Panc1 (cell line): ENCODE measurements at regions of chr10 and their contacts with region 1.

Region 1: DNA sequence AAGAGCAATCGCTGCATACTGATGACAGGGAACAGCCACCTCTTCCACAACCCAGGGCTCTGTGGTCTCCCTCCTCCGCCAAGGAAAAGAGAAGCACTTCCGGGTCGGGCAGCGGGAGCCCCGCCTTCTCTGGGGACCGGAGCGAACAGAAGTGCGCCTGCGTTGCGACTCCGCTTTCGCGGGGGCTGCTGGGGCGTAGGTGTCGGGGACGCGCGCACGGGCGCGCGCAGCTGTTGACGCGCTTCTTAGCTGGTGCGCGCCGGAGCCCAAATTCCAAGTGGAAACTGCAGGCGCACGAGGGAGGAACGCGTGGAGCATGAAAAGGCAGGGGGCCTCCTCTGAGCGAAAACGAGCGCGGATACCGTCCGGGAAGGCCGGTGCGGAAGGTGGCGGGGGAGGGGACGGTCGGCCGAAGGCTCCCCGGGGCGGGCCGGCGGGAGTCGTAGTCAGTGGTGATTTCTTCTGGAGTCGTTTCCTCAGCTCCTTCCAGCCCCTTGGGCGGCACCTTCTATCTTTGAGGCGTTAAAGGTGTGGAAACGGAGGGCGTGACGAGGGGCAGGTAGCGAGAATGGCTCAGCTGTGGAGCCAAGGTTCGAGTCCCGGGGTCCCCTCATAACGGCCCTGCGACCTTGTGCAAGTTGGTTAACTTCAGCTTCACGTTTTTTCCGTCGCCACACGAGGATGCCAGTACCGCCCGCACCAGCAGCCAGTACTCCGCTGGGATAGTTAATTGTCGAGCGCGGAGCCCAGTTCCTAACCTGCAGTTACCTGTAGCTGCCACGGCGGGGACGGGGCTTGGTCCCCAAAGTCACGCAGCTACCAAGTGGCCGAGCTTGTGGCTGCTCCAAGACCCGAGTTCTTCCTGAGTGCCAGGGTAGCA is at the starts of genes COX15 and CUTC:
- DNase-seq: peak; percentile 91
- ATAC-seq: peak; percentile 96
- H3K4me3 ChIP-seq: peak within 1 kb of the TSS; percentile 92 to 93
- H3K27ac ChIP-seq: peak within 1 kb of the TSS; percentile 98
- H3K4me1 ChIP-seq: peaks cover 22% of the 10 kb centered on the region
- H3K27me3 ChIP-seq: no peaks in the 10 kb centered on the region
- CTCF ChIP-seq: peak; percentile 59
- total RNA-seq, gene COX15: 62.9 TPM
- total RNA-seq, gene CUTC: 37.0 TPM

Region 2: DNA sequence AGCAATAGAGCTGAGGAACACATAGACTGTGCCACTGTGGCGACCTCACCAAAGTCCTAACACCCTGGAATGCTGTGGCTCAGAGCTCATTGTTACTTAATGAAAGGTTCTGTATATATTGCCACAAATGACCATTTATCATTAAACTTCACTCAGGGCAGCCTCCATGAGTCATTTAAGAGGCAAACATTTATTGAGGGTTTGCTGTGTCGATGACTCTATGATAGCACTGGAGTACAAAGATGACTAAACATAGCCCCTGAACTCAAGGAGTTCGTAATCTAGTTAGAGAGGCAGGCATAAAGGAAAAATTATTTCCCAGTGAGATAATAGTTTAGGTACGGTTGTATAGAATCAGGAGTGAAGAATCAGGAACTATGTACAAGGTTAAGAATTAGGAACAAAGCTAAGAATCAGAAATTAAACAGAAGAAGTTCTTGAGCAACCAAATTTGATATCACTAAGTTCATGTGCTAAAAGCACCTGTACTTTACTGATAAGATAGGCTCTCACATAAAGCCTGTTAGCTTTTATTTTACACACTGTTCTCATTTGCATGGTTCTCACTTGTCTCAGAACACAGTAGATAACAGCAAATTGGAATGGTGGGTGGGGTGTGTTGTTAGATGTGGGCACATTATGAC is 65.0 kb before region 1 on chr10:
- CTCF ChIA-PET with region 1: no interaction called
- POLR2A ChIA-PET with region 1: no interaction called
- in situ Hi-C with region 1: no loop called
- intact Hi-C with region 1: no loop called
- DNase-seq: no peak
- ATAC-seq: peak; percentile 53
- H3K4me3 ChIP-seq: no peak overlapping the region
- H3K27ac ChIP-seq: no peak overlapping the region
- H3K4me1 ChIP-seq: no peaks in the 10 kb centered on the region
- H3K27me3 ChIP-seq: no peaks in the 10 kb centered on the region
- CTCF ChIP-seq: no peak

Region 3: GRCh38 chr10:99788598-99789256 is 56.5 kb after region 1 on chr10:
- CTCF ChIA-PET with region 1: no interaction called
- POLR2A ChIA-PET with region 1: no interaction called
- in situ Hi-C with region 1: no loop called
- intact Hi-C with region 1: no loop called
- DNase-seq: no peak
- ATAC-seq: no peak
- H3K4me3 ChIP-seq: no peak overlapping the region
- H3K27ac ChIP-seq: peak overlapping the region; percentile 36; the same call in 1 of the 2 replicates
- H3K4me1 ChIP-seq: peaks cover 15% of the 10 kb centered on the region
- H3K27me3 ChIP-seq: no peaks in the 10 kb centered on the region
- CTCF ChIP-seq: no peak

Region 4: DNA sequence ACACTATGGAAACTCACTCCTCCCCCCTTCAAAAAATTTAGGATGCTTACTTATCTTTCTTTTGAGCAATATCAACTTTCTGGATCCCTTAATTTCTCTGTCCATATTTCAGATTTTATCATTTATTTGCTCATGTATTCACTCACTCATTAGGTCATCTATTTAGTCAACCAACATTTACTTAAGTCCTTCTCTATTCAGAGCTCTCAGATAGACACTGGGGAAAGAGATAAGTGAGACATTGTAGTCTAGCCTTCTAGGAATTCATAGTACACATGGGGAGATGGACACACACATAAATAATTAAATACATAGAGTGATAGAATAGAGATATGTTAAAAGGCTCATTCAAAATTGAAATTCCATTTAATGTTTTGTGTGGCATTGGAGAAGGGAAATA is 340.2 kb after region 1 on chr10:
- CTCF ChIA-PET with region 1: no interaction called
- POLR2A ChIA-PET with region 1: interaction called, 12 read pairs
- in situ Hi-C with region 1: no loop called
- intact Hi-C with region 1: no loop called
- DNase-seq: no peak
- ATAC-seq: no peak
- H3K4me3 ChIP-seq: no peak overlapping the region
- H3K27ac ChIP-seq: no peak overlapping the region
- H3K4me1 ChIP-seq: no peaks in the 10 kb centered on the region
- H3K27me3 ChIP-seq: no peaks in the 10 kb centered on the region
- CTCF ChIP-seq: no peak